Activated CD8-positive, alpha-beta T cell treated with anti-CD3 and anti-CD28 coated beads, Interleukin-2, amount 10 ng/mL, durations not matched to agents 7 days and 5 days (primary cell): ENCODE measurements at regions of chr3 and their contacts with region 1.

Region 1: GRCh38 chr3:73100741-73101559 is 39.5 kb downstream of the EBLN2 start:
- DNase-seq: peak; percentile 85
- ATAC-seq: peak; percentile 78
- H3K4me3 Mint-ChIP-seq: no peak overlapping the region
- H3K27ac Mint-ChIP-seq: no peak overlapping the region
- H3K4me1 Mint-ChIP-seq: no peaks in the 10 kb centered on the region
- H3K27me3 Mint-ChIP-seq: no peaks in the 10 kb centered on the region

Region 2: GRCh38 chr3:73225991-73226390 is 125.0 kb after region 1 on chr3:
- CTCF ChIA-PET with region 1: no interaction called
- POLR2A ChIA-PET with region 1: no interaction called
- DNase-seq: no peak
- ATAC-seq: no peak
- H3K4me3 Mint-ChIP-seq: no peak overlapping the region
- H3K27ac Mint-ChIP-seq: no peak overlapping the region
- H3K4me1 Mint-ChIP-seq: no peaks in the 10 kb centered on the region
- H3K27me3 Mint-ChIP-seq: no peaks in the 10 kb centered on the region

Region 3: GRCh38 chr3:73502609-73503583 is 401.9 kb after region 1 on chr3:
- CTCF ChIA-PET with region 1: interaction called, 13 read pairs
- POLR2A ChIA-PET with region 1: no interaction called
- DNase-seq: peak; percentile 64
- ATAC-seq: peak; percentile 57
- H3K4me3 Mint-ChIP-seq: no peak overlapping the region
- H3K27ac Mint-ChIP-seq: no peak overlapping the region
- H3K4me1 Mint-ChIP-seq: no peaks in the 10 kb centered on the region
- H3K27me3 Mint-ChIP-seq: peaks cover 2% of the 10 kb centered on the region